Endothelial cell of umbilical vein (primary cell): ENCODE measurements at regions of chr21 and their contacts with region 1.

Region 1: DNA sequence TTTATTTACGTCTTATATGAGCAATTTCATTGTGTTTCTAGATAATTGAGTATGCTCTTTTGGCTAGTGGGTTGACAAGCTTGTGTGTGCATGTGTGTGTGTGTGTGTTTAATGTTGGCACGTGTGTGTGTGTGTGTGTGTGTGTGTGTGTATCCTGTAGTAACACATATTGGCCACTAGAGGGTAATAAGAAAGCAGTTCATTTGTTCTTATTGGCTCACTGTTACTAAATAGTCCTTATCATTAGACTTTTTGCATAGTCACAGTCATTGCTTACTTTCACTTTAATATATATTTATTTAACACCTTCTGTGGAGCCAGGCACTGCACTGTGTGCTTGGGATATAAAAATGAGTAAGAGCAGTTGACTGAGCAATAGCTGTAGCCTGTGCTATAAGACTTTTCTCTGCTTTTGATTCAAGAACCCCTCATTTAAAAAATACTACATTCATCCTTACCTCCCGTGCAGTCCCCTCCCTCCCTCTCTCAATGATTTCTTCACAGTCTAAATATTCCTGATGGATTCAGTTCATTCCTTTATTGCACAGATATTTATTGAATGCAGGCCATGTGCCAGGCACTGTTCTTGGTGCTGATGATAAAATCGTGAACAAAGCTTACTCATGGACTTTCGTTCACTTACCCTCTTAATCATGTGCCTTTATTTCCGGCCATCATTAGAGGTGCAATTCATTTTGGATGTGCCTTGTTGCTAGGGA is 96.7 kb downstream of the DYRK1A start:
- DNase-seq: peak; percentile 71
- H3K4me3 ChIP-seq: peak overlapping the region in 1 of 3 experiments; percentile 14
- H3K27ac ChIP-seq: peak overlapping the region; percentile 2
- H3K4me1 ChIP-seq: peaks cover 10% of the 10 kb centered on the region
- H3K27me3 ChIP-seq: no peaks in the 10 kb centered on the region
- CTCF ChIP-seq: peak; percentile 44 to 61
- POLR2A ChIP-seq: no peak

Region 2: GRCh38 chr21:37374027-37374426 is 89.2 kb before region 1 on chr21:
- CTCF ChIA-PET with region 1: interaction called, 18 read pairs
- POLR2A ChIA-PET with region 1: no interaction called
- dilution Hi-C with region 1: no loop called
- intact Hi-C with region 1: loop called (anchors 5 kb)
- DNase-seq: peak; percentile 85
- H3K4me3 ChIP-seq: no peak overlapping the region
- H3K27ac ChIP-seq: peak overlapping the region; percentile 82
- H3K4me1 ChIP-seq: peaks cover 54% of the 10 kb centered on the region
- H3K27me3 ChIP-seq: no peaks in the 10 kb centered on the region
- CTCF ChIP-seq: no peak
- POLR2A ChIP-seq: no peak

Region 3: GRCh38 chr21:37475186-37475868 is 12.1 kb after region 1 on chr21:
- CTCF ChIA-PET with region 1: interaction called, 21 read pairs
- POLR2A ChIA-PET with region 1: no interaction called
- dilution Hi-C with region 1: no loop called
- intact Hi-C with region 1: no loop called
- DNase-seq: no peak
- H3K4me3 ChIP-seq: no peak overlapping the region
- H3K27ac ChIP-seq: no peak overlapping the region
- H3K4me1 ChIP-seq: peaks cover 4% of the 10 kb centered on the region
- H3K27me3 ChIP-seq: no peaks in the 10 kb centered on the region
- CTCF ChIP-seq: no peak
- POLR2A ChIP-seq: no peak

Region 4: DNA sequence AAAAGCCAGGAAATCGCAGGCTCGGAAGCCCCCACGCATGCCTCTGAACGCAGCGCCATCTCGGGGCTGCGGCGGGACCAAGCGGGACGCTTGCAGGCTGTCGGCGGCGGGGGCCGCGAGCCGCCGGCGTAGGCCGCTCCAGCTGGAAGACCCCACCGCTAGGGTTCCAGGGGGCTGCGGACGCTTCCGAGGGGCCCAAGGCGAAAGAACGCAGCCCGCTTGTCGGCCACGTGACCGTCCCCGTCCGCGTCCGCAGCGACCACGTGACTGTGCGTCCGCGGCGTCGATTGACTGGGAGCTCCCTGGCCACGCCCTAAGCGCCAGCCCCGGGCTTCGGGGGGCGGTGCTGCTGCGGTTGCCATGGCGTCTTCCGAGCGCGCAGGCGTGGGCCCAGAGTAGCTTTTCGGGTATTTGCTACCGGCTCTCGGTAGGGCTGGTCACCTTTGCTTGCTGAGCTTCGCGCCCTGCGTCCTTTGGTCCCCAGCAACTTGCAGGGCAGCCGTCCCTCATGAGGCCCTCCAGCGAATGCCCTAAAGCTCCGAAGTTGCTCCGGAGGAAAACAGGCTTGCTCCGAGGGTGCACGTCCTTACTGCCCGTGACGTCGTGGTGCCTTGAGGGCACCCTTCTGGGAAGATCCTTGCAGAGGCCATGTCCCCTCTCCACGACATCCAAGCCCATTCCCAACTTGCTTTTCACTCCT is 100.5 kb after region 1 on chr21:
- CTCF ChIA-PET with region 1: interaction called, 17 read pairs
- POLR2A ChIA-PET with region 1: no interaction called
- dilution Hi-C with region 1: no loop called
- intact Hi-C with region 1: no loop called
- DNase-seq: peak; percentile 93
- H3K4me3 ChIP-seq: peak overlapping the region; percentile 9 to 54 (median 49)
- H3K27ac ChIP-seq: peak overlapping the region; percentile 81
- H3K4me1 ChIP-seq: peaks cover 14% of the 10 kb centered on the region
- H3K27me3 ChIP-seq: peaks cover under 1 to 3% of the 10 kb centered on the region in 2 experiments
- CTCF ChIP-seq: peak; percentile 37 to 44
- POLR2A ChIP-seq: peak; percentile 89

Region 5: DNA sequence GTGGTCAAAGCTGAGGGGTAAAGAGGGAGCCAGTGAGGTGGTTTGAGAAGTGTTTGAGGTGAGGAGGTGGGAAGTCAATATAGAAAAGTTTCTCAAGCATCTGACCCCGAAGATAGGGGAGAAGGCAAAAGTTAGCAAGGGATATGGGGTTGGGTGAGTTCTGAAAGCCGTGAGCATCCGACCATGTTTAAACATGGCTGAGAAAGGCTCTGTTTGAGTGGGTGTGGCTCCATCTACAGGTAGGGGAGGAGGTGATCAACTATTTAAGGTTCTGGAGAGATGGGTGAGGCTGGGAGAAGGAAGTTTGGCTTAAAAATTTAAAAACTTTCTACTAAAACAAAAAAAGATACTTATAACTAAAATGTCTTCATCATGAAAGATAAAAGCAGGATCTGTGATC is 179.3 kb after region 1 on chr21:
- CTCF ChIA-PET with region 1: no interaction called
- POLR2A ChIA-PET with region 1: no interaction called
- dilution Hi-C with region 1: no loop called
- intact Hi-C with region 1: loop called (anchors 10 kb)
- DNase-seq: no peak
- H3K4me3 ChIP-seq: no peak overlapping the region
- H3K27ac ChIP-seq: no peak overlapping the region
- H3K4me1 ChIP-seq: peaks cover 38% of the 10 kb centered on the region
- H3K27me3 ChIP-seq: no peaks in the 10 kb centered on the region
- CTCF ChIP-seq: no peak
- POLR2A ChIP-seq: no peak